Activated T-helper 2 cell treated with anti-CD3 and anti-CD28 coated beads, Interferon-gamma antibody, Interleukin-2, Interleukin-4, amounts not matched to agents 10 μg/mL and 5 μg/mL and 100 μg/mL, durations not matched to agents 14 hours and 24 hours and 36 hours (primary cell): ENCODE measurements at regions of chr2 and their contacts with region 1.

Region 1: DNA sequence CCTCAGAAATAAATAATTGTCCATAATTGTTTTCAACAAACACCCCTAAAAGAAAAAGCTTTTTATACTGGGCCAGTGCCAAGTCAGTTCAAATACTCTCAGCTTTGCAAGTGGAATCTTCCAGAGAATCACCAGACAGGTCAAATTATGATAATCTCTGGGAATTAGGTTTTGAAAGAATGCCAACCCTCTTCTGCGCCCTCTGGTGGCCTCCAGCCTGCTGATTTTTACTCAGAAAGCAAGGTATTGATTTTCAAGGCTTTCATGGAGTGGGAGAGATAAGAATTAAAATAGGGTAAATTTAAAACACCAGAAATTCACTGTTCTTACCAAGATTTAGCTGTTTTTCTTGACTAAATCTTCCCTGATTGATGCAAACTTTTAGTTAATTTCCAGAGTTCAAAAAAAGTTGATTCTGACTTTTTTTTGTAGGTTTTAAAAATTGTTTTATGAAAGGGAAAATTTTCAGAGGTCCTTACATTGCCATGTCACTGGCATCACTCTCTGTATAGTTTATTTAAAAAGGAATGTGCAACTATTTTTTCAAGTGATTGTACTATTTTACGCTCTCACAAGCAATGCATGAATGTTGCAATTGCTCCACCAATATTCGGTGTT is 282.9 kb upstream of the TNP1 start:
- DNase-seq: no peak
- H3K4me3 Mint-ChIP-seq: no peak overlapping the region
- H3K27ac Mint-ChIP-seq: no peak overlapping the region
- H3K4me1 Mint-ChIP-seq: no peaks in the 10 kb centered on the region
- H3K27me3 Mint-ChIP-seq: peaks cover 10% of the 10 kb centered on the region

Region 2: DNA sequence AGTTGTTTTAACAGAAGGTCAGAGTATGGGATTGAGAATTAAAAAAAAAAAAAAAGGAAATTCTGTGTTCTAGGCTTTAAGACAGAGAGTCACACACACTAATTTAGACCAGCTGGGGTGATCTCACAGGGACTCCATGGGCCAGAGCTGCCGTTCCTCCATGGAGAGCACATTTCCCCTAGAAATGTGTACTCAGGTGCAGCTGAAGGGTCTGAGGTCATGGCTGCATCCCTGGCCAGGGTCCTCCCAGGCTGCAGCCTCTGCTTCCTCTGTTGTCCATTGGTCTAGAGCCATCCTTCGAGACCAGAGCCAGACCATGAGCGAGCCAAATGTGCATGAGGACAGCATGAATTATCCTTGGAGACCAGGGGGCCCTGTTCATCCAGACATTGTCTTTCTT is 92.8 kb before region 1 on chr2:
- intact Hi-C with region 1: loop called (anchors 10 kb)
- DNase-seq: no peak
- H3K4me3 Mint-ChIP-seq: no peak overlapping the region
- H3K27ac Mint-ChIP-seq: no peak overlapping the region
- H3K4me1 Mint-ChIP-seq: no peaks in the 10 kb centered on the region
- H3K27me3 Mint-ChIP-seq: peaks cover 17% of the 10 kb centered on the region